AG04450 (cell line): ENCODE measurements at regions of chr17 and their contacts with region 1.

Region 1: DNA sequence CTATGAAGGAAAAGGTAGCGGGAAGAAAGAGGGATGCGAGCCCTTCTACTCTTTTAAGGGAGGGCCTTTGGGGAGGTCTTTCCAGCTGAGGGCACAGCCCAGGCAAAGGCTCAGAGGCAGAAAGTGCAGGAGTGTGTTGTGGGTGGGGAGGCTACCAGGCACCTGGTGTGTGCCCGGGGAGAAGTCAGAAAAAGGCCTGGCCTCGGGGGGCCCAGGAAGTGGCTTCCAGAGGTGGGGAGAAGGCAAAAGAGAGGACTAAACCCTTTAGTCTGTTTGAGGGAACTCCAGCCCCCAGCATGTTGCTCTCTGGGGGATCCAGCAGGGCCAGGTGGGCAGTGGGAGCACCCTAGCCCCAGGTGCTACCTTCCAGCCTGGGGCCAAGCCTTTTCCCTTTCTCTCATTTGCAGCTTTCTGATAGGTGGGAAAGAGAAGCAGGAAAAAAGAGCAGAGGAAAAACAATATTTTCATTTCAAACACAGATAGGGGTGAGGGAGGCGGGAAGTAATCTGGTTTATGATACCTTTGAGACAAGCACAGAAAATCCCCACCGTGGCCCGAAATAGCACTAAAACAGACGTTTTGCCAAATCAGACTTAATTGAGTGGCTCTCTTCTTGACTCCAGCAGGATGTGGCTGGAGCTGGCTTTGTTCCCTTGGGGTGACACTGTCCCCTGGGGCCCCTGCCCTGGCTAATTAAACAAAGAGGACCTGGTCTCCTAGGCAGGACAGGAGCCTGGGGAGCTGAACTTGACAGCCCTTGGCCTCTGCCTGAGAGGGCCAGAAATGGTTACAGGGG is 10.4 kb downstream of the RAI1 start:
- DNase-seq: no peak
- H3K4me3 ChIP-seq: no peak overlapping the region
- H3K27ac ChIP-seq: no peak overlapping the region
- H3K27me3 ChIP-seq: no peaks in the 10 kb centered on the region
- CTCF ChIP-seq: no peak

Region 2: GRCh38 chr17:17681187-17681848 is 10.3 kb before region 1 on chr17 and contains the start of gene RAI1:
- CTCF ChIA-PET with region 1: interaction called, 17 read pairs
- POLR2A ChIA-PET with region 1: interaction called, 8 read pairs
- DNase-seq: peak; percentile 56
- H3K4me3 ChIP-seq: peak within 1 kb of the TSS; percentile 81
- H3K27ac ChIP-seq: peak within 1 kb of the TSS; percentile 47
- H3K27me3 ChIP-seq: no peaks in the 10 kb centered on the region
- CTCF ChIP-seq: peak; percentile 37; the same call in 1 of the 2 replicates
- polyA plus RNA-seq, gene RAI1: 2.1 and 3.2 TPM in 2 replicates